ENCODE measurements at regions of chr2 and their contacts with region 1.

Region 1: DNA sequence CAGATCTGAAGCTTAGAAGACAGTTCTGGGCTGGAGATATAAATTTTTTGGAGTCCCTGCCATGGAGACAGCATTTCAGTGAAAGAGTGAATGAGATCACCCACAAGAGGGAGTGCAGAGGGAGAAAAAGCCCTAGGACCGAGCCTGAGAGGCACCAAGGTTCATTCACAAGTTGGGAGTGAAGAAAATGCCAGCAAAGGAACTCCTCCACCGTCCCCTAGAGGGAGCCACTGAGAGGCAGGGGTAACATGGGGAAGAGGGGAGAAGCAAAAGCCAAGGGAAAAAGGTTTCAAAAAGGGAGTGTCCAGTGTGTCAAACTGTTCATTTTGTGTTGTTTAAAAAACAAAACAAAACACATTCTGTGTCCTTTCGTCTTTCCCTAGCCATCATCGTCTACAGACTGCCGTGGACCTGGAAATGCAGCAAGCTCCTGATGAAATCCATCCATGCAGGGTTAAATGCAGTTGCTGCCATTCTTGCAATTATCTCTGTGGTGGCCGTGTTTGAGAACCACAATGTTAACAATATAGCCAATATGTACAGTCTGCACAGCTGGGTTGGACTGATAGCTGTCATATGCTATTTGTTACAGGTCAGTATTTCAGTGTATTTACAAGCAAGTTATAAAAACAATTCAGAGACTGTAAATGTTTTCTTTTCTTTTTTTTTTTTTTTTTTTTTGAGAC is 19.1 kb downstream of the CYBRD1 start:
- DNase-seq: no peak
- ATAC-seq: peak; percentile 55
- H3K4me3 ChIP-seq: no peak overlapping the region
- H3K27ac ChIP-seq: peak overlapping the region; percentile 72
- H3K4me1 ChIP-seq: peaks cover 21% of the 10 kb centered on the region
- H3K27me3 ChIP-seq: no peaks in the 10 kb centered on the region
- CTCF ChIP-seq: peak; percentile 37 to 61 (median 45); a peak in 5 of 6 replicates
- EP300 ChIP-seq: no peak
- POLR2A ChIP-seq: no peak
- RAD21 ChIP-seq: peak; percentile 21; the same call in 1 of the 2 replicates

Region 2: GRCh38 chr2:171416009-171416926 is 125.1 kb before region 1 on chr2:
- CTCF ChIA-PET with region 1: no interaction called
- POLR2A ChIA-PET with region 1: no interaction called
- RAD21 ChIA-PET with region 1: no interaction called
- SMC1A ChIA-PET with region 1: no interaction called
- in situ Hi-C with region 1: no loop called
- intact Hi-C with region 1: no loop called
- DNase-seq: peak; percentile 95
- ATAC-seq: peak; percentile 91
- H3K4me3 ChIP-seq: no peak overlapping the region; the same call in 1 of the 2 replicates
- H3K27ac ChIP-seq: peak overlapping the region; percentile 83
- H3K4me1 ChIP-seq: peaks cover 32% of the 10 kb centered on the region
- H3K27me3 ChIP-seq: no peaks in the 10 kb centered on the region
- CTCF ChIP-seq: peak; percentile 83 to 95 (median 88); a peak in 5 of 6 replicates
- EP300 ChIP-seq: peak in 1 of 2 experiments; percentile 50; a peak in 2 of 4 replicates
- POLR2A ChIP-seq: peak; percentile 64
- RAD21 ChIP-seq: peak; percentile 97

Region 3: GRCh38 chr2:171491292-171491691 is 50.1 kb before region 1 on chr2:
- CTCF ChIA-PET with region 1: no interaction called
- POLR2A ChIA-PET with region 1: no interaction called
- RAD21 ChIA-PET with region 1: no interaction called
- SMC1A ChIA-PET with region 1: no interaction called
- in situ Hi-C with region 1: no loop called
- intact Hi-C with region 1: no loop called
- DNase-seq: no peak
- ATAC-seq: no peak
- H3K4me3 ChIP-seq: no peak overlapping the region
- H3K27ac ChIP-seq: no peak overlapping the region
- H3K4me1 ChIP-seq: no peaks in the 10 kb centered on the region
- H3K27me3 ChIP-seq: no peaks in the 10 kb centered on the region
- CTCF ChIP-seq: no peak
- EP300 ChIP-seq: no peak
- POLR2A ChIP-seq: no peak
- RAD21 ChIP-seq: no peak

Region 4: DNA sequence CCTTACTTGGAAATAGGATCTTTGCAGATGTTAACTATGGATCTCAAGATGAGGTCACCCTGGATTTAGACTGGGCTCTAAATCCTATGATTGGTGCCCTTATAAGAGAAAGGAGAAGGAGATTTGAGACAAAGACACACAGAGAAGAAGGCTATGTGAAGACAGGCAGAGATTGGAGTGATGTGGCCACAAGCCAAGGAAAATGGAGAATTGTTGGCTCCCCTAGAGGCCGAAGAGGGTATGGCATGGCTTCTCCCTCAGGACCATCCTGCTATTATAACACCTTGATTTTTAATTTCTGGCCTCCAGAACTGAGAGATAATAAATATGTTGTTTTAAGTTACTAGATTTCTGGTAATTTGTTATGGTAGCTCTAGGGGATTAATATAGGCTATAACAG is 11.4 kb before region 1 on chr2:
- CTCF ChIA-PET with region 1: interaction called, 17 read pairs
- POLR2A ChIA-PET with region 1: interaction called, 3 read pairs
- RAD21 ChIA-PET with region 1: interaction called, 4 read pairs
- SMC1A ChIA-PET with region 1: interaction called, 11 read pairs
- in situ Hi-C with region 1: no loop called
- intact Hi-C with region 1: no loop called
- DNase-seq: no peak
- ATAC-seq: peak; percentile 44; the same call in 2 of the 3 replicates
- H3K4me3 ChIP-seq: no peak overlapping the region
- H3K27ac ChIP-seq: peak overlapping the region; percentile 57
- H3K4me1 ChIP-seq: peaks cover 11% of the 10 kb centered on the region
- H3K27me3 ChIP-seq: no peaks in the 10 kb centered on the region
- CTCF ChIP-seq: peak; percentile 11 to 74 (median 63); a peak in 5 of 6 replicates
- EP300 ChIP-seq: no peak
- POLR2A ChIP-seq: no peak
- RAD21 ChIP-seq: 0 out of 2 replicates have a peak, but pooled peaks have one; percentile 6

Measured in GM12878 (cell line).